Activated CD8-positive, alpha-beta T cell treated with anti-CD3 and anti-CD28 coated beads for 36 hours (primary cell): ENCODE measurements at regions of chr19 and their contacts with region 1.

Region 1: DNA sequence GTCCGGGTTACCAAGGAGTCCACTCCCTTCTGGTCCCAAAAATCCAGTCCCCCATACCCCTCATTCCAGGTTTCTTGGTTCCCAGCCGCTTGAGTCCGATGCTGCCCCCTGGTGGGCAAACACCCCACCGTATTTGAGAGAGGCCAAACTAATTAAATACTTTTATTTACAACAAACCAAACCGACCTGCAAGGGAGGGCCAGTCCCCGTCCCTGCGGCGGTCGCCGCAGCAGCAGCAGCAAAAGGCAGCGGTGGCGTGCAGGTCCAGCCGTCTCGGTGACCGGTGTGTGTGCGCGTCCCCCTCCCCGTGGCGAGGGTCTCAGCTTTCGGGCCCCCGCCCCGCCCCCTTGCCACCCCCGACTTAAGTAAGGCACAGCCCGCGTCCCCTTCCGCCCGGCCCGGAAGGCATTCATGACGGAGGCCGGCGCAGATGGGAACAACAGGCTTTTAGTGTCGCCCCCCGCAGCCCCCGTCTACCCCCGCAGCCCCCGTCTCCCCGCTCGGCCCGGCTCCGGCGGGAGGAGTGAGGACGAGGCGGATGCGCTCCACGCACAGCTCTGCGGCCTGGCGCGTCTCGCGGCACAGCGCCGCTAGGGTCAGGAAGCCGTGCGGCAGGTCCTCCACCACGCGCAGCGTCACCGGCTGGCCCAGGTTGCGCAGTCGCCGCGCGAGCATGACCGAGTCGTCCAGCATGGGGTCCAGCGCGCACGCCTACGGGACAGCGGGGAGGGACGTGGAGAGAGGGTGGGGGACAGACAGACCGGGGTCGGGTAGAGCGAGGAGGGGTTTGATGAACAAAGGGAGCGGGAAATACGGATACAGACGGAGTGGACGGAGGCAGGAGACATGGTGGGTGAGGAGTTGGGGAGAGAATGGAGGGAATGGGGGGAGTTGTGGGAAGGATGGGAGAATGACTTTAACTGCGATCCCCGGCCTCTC is 11.5 kb upstream of the CNFN start:
- DNase-seq: peak; percentile 88
- ATAC-seq: peak; percentile 47
- H3K4me3 Mint-ChIP-seq: peak overlapping the region; percentile 73
- H3K27ac Mint-ChIP-seq: peak overlapping the region; percentile 75
- H3K4me1 Mint-ChIP-seq: peaks cover 40% of the 10 kb centered on the region
- H3K27me3 Mint-ChIP-seq: no peaks in the 10 kb centered on the region
- CTCF ChIP-seq: peak; percentile 95

Region 2: GRCh38 chr19:42378225-42379215 is 23.1 kb before region 1 on chr19:
- CTCF ChIA-PET with region 1: interaction called, 13 read pairs
- POLR2A ChIA-PET with region 1: interaction called, 9 read pairs
- intact Hi-C with region 1: no loop called
- DNase-seq: peak; percentile 37
- ATAC-seq: peak; percentile 84
- H3K4me3 Mint-ChIP-seq: no peak overlapping the region
- H3K27ac Mint-ChIP-seq: peak overlapping the region; percentile 45
- H3K4me1 Mint-ChIP-seq: peaks cover 12% of the 10 kb centered on the region
- H3K27me3 Mint-ChIP-seq: peaks cover 20% of the 10 kb centered on the region
- CTCF ChIP-seq: no peak

Region 3: GRCh38 chr19:42412227-42412626 is 10.6 kb after region 1 on chr19:
- CTCF ChIA-PET with region 1: interaction called, 17 read pairs
- POLR2A ChIA-PET with region 1: interaction called, 5 read pairs
- intact Hi-C with region 1: no loop called
- DNase-seq: no peak
- ATAC-seq: no peak
- H3K4me3 Mint-ChIP-seq: no peak overlapping the region
- H3K27ac Mint-ChIP-seq: no peak overlapping the region
- H3K4me1 Mint-ChIP-seq: no peaks in the 10 kb centered on the region
- H3K27me3 Mint-ChIP-seq: no peaks in the 10 kb centered on the region
- CTCF ChIP-seq: no peak

Region 4: DNA sequence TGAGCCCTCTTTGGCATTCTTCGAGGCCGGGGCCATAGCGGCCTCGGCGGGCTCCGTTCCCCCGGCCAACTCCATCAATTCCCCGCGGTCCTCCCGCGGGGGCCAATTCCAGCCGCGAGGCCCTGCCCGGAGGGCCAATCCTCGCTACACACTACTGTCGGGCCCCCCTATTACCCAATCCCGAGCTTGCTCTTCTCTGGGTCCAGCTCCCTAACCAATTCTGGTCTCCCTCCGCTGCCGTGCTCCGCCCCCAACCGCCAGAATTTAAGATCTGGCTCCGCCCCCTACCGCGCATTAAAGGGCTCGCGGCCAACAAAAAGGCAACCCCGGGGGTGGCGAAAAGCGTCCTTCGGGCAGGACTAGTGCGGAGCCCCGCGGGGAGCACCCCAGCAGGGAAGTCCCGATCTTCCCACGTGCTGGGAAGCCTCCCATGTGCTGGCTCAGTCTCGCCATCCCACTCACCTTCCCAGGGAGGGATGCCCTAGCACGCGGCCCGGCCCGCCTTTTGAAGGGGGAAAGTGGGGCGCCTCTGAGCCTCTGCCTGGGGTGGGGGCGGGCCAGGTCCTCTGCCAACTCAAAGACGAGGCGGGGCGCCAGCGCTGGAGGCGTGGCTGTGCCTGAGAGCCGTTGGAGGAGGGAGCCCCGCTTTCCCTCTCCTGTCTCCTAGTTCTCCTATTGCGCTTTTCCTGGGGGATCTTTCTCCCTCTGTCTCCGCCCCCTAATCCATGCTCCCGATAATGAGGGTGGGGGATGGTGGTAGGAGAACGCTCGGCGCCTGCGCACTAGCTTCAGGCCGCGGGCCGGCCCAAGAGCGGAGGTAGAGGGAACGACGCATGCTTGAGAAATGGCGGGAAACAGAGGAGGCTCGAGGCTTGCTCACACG is 22.1 kb after region 1 on chr19:
- CTCF ChIA-PET with region 1: interaction called, 19 read pairs
- POLR2A ChIA-PET with region 1: interaction called, 4 read pairs
- intact Hi-C with region 1: no loop called
- DNase-seq: peak; percentile 97
- ATAC-seq: peak; percentile 92
- H3K4me3 Mint-ChIP-seq: peak overlapping the region; percentile 90
- H3K27ac Mint-ChIP-seq: peak overlapping the region; percentile 89
- H3K4me1 Mint-ChIP-seq: peaks cover 34% of the 10 kb centered on the region
- H3K27me3 Mint-ChIP-seq: no peaks in the 10 kb centered on the region
- CTCF ChIP-seq: no peak